ENCODE measurements at regions of chr7 and their contacts with region 1.

Region 1: GRCh38 chr7:4753711-4754432 is 21.6 kb upstream of the AP5Z1 start:
- DNase-seq: no peak
- H3K4me3 ChIP-seq: no peak overlapping the region
- CTCF ChIP-seq: peak; percentile 85

Region 2: GRCh38 chr7:4610768-4611467 is 143.0 kb before region 1 on chr7:
- CTCF ChIA-PET with region 1: interaction called, 32 read pairs
- POLR2A ChIA-PET with region 1: no interaction called
- DNase-seq: no peak
- H3K4me3 ChIP-seq: no peak overlapping the region
- CTCF ChIP-seq: peak; percentile 69

Region 3: DNA sequence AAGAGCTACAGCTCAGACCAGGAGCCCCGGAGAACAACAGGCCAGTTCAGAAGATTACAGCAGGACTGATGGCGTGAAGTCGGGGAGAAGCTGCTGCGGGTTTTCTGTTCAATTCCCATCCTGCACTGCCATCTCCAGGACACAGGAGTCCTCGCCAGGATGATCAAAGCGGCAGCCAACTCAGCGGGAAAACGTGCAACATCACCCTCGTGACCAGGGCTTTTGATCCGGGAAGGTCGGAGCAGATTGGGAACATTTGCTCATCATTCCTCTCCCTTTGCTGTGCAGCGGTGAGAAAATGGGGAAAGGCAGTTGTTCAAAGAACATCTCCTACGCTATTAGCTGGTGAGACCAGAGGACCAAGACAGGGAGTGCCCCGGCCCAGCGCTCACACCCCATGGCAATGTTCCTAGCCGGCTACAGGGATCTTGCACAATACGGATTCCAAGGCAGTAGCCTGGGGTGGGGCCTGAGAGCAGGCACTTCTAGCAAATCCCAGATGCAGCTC is 122.2 kb before region 1 on chr7:
- CTCF ChIA-PET with region 1: interaction called, 29 read pairs
- POLR2A ChIA-PET with region 1: no interaction called
- DNase-seq: peak; percentile 60
- H3K4me3 ChIP-seq: peak overlapping the region; percentile 53
- CTCF ChIP-seq: peak; percentile 79

Region 4: DNA sequence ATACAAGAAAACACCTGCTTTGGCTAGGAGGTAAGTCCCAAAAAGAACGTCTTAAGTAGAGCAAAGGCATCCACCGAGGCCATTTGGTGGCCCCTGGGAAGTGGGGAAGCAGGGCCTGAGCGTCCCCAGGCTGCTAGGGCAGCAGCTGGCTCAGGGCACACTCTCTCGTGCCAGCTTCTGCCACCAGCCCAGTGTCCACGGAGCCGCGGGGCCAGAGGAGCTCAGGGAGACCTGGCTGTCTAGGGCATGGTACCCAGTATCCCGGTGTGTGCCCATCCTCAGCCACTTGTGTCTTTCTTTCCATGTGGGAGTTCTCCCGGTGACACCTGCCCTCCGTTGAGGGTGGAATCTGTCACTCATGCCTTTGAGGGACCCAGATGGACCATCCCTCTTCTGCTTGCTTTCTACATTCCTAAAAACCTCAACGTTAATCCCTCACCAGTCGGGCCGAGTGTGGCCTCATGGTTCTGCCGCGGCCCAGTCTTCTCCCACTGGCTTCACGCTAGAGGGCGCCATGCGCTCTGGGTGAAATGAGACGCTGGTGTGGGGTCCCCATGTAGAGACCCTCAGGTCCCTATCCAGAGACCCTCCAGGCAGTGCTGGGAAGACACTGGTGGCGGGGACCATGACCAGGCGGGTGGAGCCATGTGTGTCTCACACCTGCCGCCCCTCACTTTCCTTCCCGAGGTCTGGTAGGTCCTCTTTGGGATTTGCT is 12.1 kb after region 1 on chr7:
- CTCF ChIA-PET with region 1: interaction called, 44 read pairs
- POLR2A ChIA-PET with region 1: no interaction called
- DNase-seq: no peak
- H3K4me3 ChIP-seq: no peak overlapping the region
- CTCF ChIP-seq: peak; percentile 9

Region 5: GRCh38 chr7:4883374-4884144 is 129.7 kb after region 1 on chr7 and contains the start of gene RADIL:
- CTCF ChIA-PET with region 1: no interaction called
- POLR2A ChIA-PET with region 1: no interaction called
- DNase-seq: peak; percentile 16
- H3K4me3 ChIP-seq: peak within 1 kb of the TSS; percentile 54
- CTCF ChIP-seq: peak; percentile 93